ENCODE measurements at regions of chr12 and their contacts with region 1.

Region 1: GRCh38 chr12:64801381-64801780 is 23.1 kb upstream of the TBC1D30 start:
- DNase-seq: no peak
- H3K4me3 Mint-ChIP-seq: no peak overlapping the region
- H3K27ac Mint-ChIP-seq: no peak overlapping the region
- H3K4me1 Mint-ChIP-seq: peaks cover 2% of the 10 kb centered on the region
- H3K27me3 Mint-ChIP-seq: peaks cover 28% of the 10 kb centered on the region

Region 2: GRCh38 chr12:64596252-64596793 is 205.1 kb before region 1 on chr12:
- CTCF ChIA-PET with region 1: no interaction called
- POLR2A ChIA-PET with region 1: no interaction called
- intact Hi-C with region 1: no loop called
- DNase-seq: no peak
- H3K4me3 Mint-ChIP-seq: no peak overlapping the region
- H3K27ac Mint-ChIP-seq: no peak overlapping the region
- H3K4me1 Mint-ChIP-seq: peaks cover 36% of the 10 kb centered on the region
- H3K27me3 Mint-ChIP-seq: no peaks in the 10 kb centered on the region

Region 3: DNA sequence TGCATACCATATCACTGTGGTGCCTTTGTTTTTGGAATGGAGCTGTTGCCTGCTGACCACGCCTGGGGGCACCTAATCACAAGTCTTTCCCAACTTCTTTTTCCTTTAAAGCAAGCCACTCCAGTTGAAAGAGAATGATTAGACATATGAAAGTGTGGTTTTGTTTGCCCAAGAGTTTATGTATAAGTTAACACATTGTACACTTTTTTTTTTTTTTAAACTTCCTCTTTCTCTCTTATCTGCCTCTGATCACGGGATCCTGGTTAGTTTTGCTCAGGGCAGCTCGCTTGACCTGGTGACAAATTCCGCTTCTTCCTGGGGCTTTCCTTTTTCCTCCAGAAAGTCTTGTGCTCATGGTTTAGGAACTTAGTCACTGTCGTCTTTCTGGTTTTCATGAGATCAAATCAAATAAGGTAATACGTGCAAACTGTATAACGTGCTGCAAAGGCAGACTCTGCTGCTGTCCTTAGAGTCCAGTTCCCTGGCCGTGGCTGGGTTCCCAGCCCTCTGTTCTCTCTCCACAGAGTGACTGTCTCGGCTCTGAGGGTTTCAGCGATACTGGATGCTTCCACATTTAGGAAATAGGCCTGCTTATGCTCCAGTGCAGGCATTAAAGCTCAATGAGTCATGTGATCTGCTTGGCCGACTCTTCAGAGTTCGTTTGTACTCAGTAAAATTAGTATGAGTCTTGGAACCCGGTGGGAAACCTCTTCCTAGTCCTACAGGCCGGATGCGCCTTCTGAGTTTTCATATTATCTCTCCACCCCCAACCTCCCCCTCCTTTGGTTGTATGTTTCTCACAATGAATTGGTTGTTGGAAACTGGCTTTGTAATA is 175.9 kb before region 1 on chr12:
- CTCF ChIA-PET with region 1: no interaction called
- POLR2A ChIA-PET with region 1: no interaction called
- intact Hi-C with region 1: no loop called
- DNase-seq: peak; percentile 58
- H3K4me3 Mint-ChIP-seq: peak overlapping the region; percentile 65
- H3K27ac Mint-ChIP-seq: peak overlapping the region; percentile 88
- H3K4me1 Mint-ChIP-seq: peaks cover 66% of the 10 kb centered on the region
- H3K27me3 Mint-ChIP-seq: no peaks in the 10 kb centered on the region

Region 4: DNA sequence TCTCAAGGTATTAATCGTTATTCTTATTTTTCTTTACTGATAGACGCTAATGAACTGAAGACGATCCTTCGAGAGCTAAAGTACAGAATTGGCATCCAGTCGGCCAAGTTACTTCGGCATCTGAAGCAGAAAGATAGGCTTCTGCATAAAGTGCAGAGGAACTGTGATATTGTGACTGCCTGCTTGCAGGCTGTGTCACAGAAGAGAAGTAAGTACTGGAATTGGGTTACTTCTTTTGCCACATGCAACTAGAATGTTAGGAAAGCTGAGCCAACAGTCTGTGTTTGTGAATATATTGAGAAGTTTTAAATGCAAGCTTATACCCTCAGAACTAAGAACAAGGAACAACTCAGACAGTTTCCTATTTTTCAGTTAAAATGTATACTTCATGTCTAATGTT is 15.5 kb before region 1 on chr12:
- CTCF ChIA-PET with region 1: interaction called, 30 read pairs
- POLR2A ChIA-PET with region 1: no interaction called
- intact Hi-C with region 1: no loop called
- DNase-seq: no peak
- H3K4me3 Mint-ChIP-seq: no peak overlapping the region
- H3K27ac Mint-ChIP-seq: no peak overlapping the region
- H3K4me1 Mint-ChIP-seq: peaks cover 12% of the 10 kb centered on the region
- H3K27me3 Mint-ChIP-seq: peaks cover 34% of the 10 kb centered on the region

Measured in activated CD4-positive, alpha-beta memory T cell treated with anti-CD3 and anti-CD28 coated beads for 36 hours (primary cell).